CD4-positive, alpha-beta memory T cell (primary cell): ENCODE measurements at regions of chr3 and their contacts with region 1.

Region 1: GRCh38 chr3:112734718-112735350 is 93.9 kb upstream of the CCDC80 start:
- DNase-seq: peak; percentile 63 to 72 (median 69)
- H3K4me3 ChIP-seq: no peak overlapping the region
- H3K4me3 Mint-ChIP-seq: peak overlapping the region in 2 of 8 donors; percentile 3 to 5
- H3K27ac ChIP-seq: no peak overlapping the region
- H3K27ac Mint-ChIP-seq: peak overlapping the region in 5 of 7 donors; percentile 5 to 58 (median 40)
- H3K4me1 ChIP-seq: peaks cover 56% of the 10 kb centered on the region
- H3K4me1 Mint-ChIP-seq: peaks cover 30 to 50% (median 42%) of the 10 kb centered on the region in 4 donors
- H3K27me3 ChIP-seq: no peaks in the 10 kb centered on the region
- H3K27me3 Mint-ChIP-seq: no peaks in the 10 kb centered on the region

Region 2: GRCh38 chr3:112642912-112643506 is 91.8 kb before region 1 on chr3:
- CTCF ChIA-PET with region 1: interaction called, 44 read pairs
- POLR2A ChIA-PET with region 1: interaction called, 5 read pairs
- intact Hi-C with region 1: loop called (anchors 1 kb)
- DNase-seq: peak; percentile 74 to 79 (median 78)
- H3K4me3 ChIP-seq: peak overlapping the region in 1 of 2 donors; percentile 1
- H3K4me3 Mint-ChIP-seq: peak overlapping the region; percentile 67 to 86 (median 81)
- H3K27ac ChIP-seq: no peak overlapping the region
- H3K27ac Mint-ChIP-seq: peak overlapping the region; percentile 0 to 53 (median 15)
- H3K4me1 ChIP-seq: peaks cover 14% of the 10 kb centered on the region
- H3K4me1 Mint-ChIP-seq: peaks cover 11 to 18% (median 14%) of the 10 kb centered on the region in 4 donors
- H3K27me3 ChIP-seq: no peaks in the 10 kb centered on the region
- H3K27me3 Mint-ChIP-seq: peaks cover 5% of the 10 kb centered on the region in 2 donors

Region 3: DNA sequence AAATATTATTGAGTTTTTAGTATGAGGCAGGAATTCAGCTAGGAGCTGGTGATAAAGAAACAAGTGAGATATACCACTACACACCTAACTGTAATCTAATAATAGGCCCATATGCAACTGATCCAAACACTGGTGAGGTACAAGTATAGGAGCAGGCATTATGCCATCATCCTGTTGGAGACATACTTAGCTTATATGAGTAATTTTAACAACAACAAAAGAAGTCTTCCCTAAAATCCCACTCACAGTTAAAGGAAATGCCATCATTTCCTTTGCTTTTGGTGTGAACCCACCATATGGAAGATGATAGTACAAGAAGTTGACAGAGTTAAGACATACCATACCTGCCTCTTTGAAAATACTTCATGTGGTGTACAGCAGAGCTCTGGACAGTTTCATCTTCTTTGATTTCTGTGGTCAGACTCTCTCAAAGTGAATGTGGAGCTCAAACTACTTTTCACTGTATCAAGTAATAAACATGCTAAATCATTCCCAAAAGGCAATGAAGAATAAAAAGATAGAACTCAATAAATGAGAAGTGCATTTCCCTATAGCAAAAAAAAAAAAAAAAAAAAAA is 26.3 kb after region 1 on chr3:
- CTCF ChIA-PET with region 1: interaction called, 13 read pairs
- POLR2A ChIA-PET with region 1: no interaction called
- intact Hi-C with region 1: no loop called
- DNase-seq: no peak
- H3K4me3 ChIP-seq: no peak overlapping the region
- H3K4me3 Mint-ChIP-seq: no peak overlapping the region
- H3K27ac ChIP-seq: no peak overlapping the region
- H3K27ac Mint-ChIP-seq: no peak overlapping the region
- H3K4me1 ChIP-seq: no peaks in the 10 kb centered on the region
- H3K4me1 Mint-ChIP-seq: peaks cover 0 to 9% (median 2%) of the 10 kb centered on the region in 4 donors
- H3K27me3 ChIP-seq: no peaks in the 10 kb centered on the region
- H3K27me3 Mint-ChIP-seq: peaks cover 0 to 2% of the 10 kb centered on the region in 2 donors

Region 4: GRCh38 chr3:112807685-112808084 is 72.9 kb after region 1 on chr3:
- CTCF ChIA-PET with region 1: interaction called, 25 read pairs
- POLR2A ChIA-PET with region 1: interaction called, 12 read pairs
- intact Hi-C with region 1: no loop called
- DNase-seq: peak; percentile 22 to 51 (median 45)
- H3K4me3 ChIP-seq: no peak overlapping the region
- H3K4me3 Mint-ChIP-seq: peak overlapping the region in 4 of 8 donors; percentile 11 to 42 (median 30)
- H3K27ac ChIP-seq: no peak overlapping the region
- H3K27ac Mint-ChIP-seq: peak overlapping the region in 6 of 7 donors; percentile 38 to 84 (median 54)
- H3K4me1 ChIP-seq: peaks cover 41% of the 10 kb centered on the region
- H3K4me1 Mint-ChIP-seq: peaks cover 29 to 80% (median 54%) of the 10 kb centered on the region in 4 donors
- H3K27me3 ChIP-seq: no peaks in the 10 kb centered on the region
- H3K27me3 Mint-ChIP-seq: no peaks in the 10 kb centered on the region

Region 5: DNA sequence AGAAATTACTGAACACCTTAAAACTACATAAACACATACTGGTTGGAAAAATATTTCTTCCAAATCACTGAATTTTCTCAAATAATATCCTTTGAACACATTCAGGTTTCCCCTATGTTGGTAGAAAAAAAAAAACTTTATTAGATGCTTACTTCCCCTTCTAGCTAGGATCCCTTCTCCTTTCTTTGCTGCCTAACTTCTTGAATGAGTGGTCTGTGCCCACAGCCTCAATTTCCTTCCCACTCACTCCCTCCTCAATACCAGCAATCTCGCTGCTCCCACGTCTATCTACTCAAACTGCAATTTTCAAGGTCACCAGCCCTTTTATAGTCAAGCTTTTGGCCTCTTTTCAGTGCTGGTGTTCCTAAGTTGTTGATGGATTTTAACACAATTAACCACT is 231.8 kb after region 1 on chr3:
- CTCF ChIA-PET with region 1: interaction called, 114 read pairs
- POLR2A ChIA-PET with region 1: interaction called, 5 read pairs
- intact Hi-C with region 1: no loop called
- DNase-seq: no peak
- H3K4me3 ChIP-seq: no peak overlapping the region
- H3K4me3 Mint-ChIP-seq: peak overlapping the region in 5 of 8 donors; percentile 7 to 54 (median 27)
- H3K27ac ChIP-seq: no peak overlapping the region
- H3K27ac Mint-ChIP-seq: peak overlapping the region in 5 of 7 donors; percentile 3 to 81 (median 65)
- H3K4me1 ChIP-seq: peaks cover 50% of the 10 kb centered on the region
- H3K4me1 Mint-ChIP-seq: peaks cover 53 to 83% (median 68%) of the 10 kb centered on the region in 4 donors
- H3K27me3 ChIP-seq: no peaks in the 10 kb centered on the region
- H3K27me3 Mint-ChIP-seq: no peaks in the 10 kb centered on the region

Region 6: GRCh38 chr3:112990672-112991602 is 256.1 kb after region 1 on chr3 and contains the start of gene GTPBP8:
- CTCF ChIA-PET with region 1: interaction called, 161 read pairs
- POLR2A ChIA-PET with region 1: interaction called, 14 read pairs
- intact Hi-C with region 1: no loop called
- DNase-seq: peak; percentile 79 to 88 (median 81)
- H3K4me3 ChIP-seq: peak within 1 kb of the TSS; percentile 73 to 91
- H3K4me3 Mint-ChIP-seq: peak within 1 kb of the TSS; percentile 95 to 98 (median 96)
- H3K27ac ChIP-seq: peak within 1 kb of the TSS; percentile 78
- H3K27ac Mint-ChIP-seq: peak within 1 kb of the TSS; percentile 94 to 98 (median 96)
- H3K4me1 ChIP-seq: peaks cover 49% of the 10 kb centered on the region
- H3K4me1 Mint-ChIP-seq: peaks cover 51 to 80% (median 62%) of the 10 kb centered on the region in 4 donors
- H3K27me3 ChIP-seq: no peaks in the 10 kb centered on the region
- H3K27me3 Mint-ChIP-seq: no peaks in the 10 kb centered on the region
- total RNA-seq, gene GTPBP8: 36.0 to 40.0 TPM

Region 7: DNA sequence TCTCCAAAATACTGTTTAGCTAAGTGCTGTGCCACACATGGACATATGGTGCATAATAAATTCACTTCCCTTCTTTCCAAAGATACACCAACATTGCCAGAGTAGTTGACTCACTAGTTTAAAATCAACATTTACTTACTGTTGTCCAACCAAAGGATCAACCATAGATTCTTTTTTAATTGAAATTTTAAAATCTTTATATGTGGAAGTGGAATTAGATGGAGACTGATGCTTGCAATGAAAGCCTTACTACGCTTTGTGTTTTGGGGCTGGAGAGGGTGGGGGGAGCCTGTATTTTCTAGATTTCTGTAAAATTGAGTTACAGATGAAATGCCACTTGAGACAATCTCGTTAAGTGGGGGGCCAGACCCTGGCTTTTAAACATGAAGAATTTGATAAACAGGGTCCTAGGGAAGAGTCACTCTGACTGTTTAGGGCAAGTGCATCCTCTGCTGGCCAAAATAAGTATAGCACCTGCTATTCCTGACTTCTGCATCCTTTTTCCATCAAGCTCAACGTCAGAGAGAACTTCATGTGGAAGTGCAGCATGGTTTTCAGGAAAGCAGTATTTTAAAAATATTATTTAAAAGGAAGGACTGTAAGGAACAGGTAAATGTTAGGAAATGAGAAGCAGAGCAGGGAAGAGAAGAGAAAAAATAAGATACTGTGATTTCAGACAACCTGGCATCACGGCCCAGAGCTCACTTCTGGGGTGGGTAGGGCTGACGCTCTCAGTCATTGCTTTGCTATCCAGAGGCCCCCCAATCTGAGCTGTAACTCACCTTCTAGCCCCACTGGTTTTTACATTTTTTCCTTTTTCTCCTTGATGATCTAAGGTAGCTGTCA is 553.2 kb after region 1 on chr3:
- CTCF ChIA-PET with region 1: interaction called, 6 read pairs
- POLR2A ChIA-PET with region 1: no interaction called
- intact Hi-C with region 1: loop called (anchors 2 kb)
- DNase-seq: peak in 4 of 5 donors; percentile 25 to 49 (median 36)
- H3K4me3 ChIP-seq: no peak overlapping the region
- H3K4me3 Mint-ChIP-seq: no peak overlapping the region
- H3K27ac ChIP-seq: no peak overlapping the region
- H3K27ac Mint-ChIP-seq: no peak overlapping the region
- H3K4me1 ChIP-seq: no peaks in the 10 kb centered on the region
- H3K4me1 Mint-ChIP-seq: no peaks in the 10 kb centered on the region
- H3K27me3 ChIP-seq: no peaks in the 10 kb centered on the region
- H3K27me3 Mint-ChIP-seq: no peaks in the 10 kb centered on the region